GM18951 (cell line): ENCODE measurements at regions of chr16 and their contacts with region 1.

Region 1: GRCh38 chr16:27169511-27170071 is 33.7 kb upstream of the KDM8 start:
- POLR2A ChIP-seq: no peak

Region 2: DNA sequence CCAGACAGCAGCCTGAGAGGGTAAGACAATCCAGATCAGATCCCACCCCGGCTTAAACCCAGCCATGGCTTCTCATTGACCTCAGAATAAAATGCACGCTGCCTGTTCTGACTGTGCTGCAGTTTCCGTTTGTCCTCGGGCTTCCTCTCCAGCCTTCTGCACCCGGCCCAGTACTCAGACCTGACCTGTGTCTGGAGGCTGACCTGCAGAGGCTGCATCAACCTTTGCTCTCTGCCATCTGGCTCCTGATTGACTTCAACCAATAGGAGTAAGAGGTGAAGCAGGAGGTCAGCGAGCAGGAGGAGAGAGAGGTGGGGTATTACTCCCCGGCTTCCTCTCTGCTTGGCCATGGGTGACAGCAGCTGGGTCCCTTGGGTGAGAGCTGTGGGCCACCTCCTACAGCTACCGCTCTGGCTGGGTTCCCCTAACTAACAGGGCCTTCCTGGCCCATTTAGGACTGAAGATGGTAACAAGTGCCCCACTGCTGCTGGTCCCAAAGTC is 56.2 kb before region 1 on chr16:
- in situ Hi-C with region 1: no loop called
- POLR2A ChIP-seq: no peak

Region 3: GRCh38 chr16:27461483-27462171 is 292.0 kb after region 1 on chr16:
- in situ Hi-C with region 1: loop called (anchors 10 kb)
- POLR2A ChIP-seq: no peak